Activated CD8-positive, alpha-beta memory T cell treated with anti-CD3 and anti-CD28 coated beads, Interleukin-2, amount 10 ng/mL, durations not matched to agents 7 days and 5 days (primary cell): ENCODE measurements at regions of chr5 and their contacts with region 1.

Region 1: GRCh38 chr5:175478384-175479124 is at the start of gene SFXN1:
- DNase-seq: peak; percentile 86
- ATAC-seq: peak; percentile 86
- H3K4me3 Mint-ChIP-seq: peak within 1 kb of the TSS; percentile 95
- H3K27ac Mint-ChIP-seq: peak within 1 kb of the TSS; percentile 92
- H3K4me1 Mint-ChIP-seq: peaks cover 42% of the 10 kb centered on the region
- H3K27me3 Mint-ChIP-seq: peaks cover 30% of the 10 kb centered on the region
- total RNA-seq, gene SFXN1: 174 to 230 TPM

Region 2: DNA sequence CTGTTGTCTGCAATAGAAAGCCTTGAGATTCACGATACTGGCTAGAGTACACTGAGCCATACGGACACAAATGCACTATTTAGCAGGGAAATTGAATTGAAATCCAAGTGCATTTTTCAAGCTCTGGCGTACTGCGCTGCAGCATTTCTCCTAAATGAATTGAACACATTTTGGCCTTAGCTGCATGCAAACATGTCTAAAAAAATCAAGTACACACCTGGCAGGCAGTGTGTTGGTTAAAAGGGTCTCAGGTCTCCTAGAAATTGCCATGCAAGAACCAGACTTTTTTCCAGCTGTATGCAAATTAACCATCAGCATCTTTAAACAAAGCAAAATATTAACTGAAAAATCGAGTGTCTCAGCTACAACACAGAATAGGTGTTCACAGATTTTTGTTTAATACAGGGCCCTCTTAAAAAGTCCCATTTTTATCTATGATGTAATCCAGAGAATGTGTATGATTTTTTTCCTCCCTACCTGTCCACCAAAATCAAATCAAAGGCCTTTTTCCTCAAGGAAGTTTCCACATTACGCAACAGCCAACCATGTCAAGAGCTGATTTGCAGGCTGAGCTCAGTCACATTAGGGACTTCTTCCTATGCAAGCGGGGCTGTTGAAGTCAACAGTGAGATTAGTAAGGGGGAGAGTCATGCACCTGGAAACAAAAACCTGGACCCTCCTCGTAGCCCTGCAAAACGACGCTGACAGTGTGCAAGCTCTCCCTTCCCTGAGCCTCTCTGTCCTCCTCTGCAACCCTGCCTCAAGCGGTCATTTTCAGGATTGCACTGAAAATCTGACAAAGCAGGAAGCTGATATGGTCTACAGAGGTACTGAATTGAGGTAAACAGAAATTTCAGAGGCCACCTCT is 14.2 kb before region 1 on chr5:
- CTCF ChIA-PET with region 1: interaction called, 35 read pairs
- DNase-seq: peak; percentile 86
- ATAC-seq: peak; percentile 98
- H3K4me3 Mint-ChIP-seq: no peak overlapping the region
- H3K27ac Mint-ChIP-seq: peak overlapping the region; percentile 39
- H3K4me1 Mint-ChIP-seq: peaks cover 12% of the 10 kb centered on the region
- H3K27me3 Mint-ChIP-seq: peaks cover 22% of the 10 kb centered on the region

Region 3: DNA sequence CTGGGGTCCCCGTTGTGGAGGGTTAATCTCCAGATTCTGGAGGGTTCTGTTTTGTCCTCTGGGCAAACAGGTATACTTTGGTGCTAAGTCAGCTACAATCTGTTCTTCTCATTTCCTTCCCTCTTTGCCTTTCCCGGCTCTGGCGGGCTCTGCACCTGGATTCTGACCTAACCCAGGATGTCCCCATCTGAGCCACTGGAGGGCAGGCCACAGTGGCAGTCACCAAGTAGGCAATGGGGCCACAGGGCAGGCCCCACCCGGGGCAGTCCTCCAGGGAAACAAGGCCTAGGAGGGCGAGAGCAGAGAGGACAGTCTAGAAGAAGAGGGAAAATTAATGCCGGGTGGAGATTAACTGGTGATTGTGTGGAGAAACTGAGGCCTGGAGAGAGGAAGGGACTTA is 138.9 kb after region 1 on chr5:
- CTCF ChIA-PET with region 1: no interaction called
- DNase-seq: no peak
- ATAC-seq: no peak
- H3K4me3 Mint-ChIP-seq: no peak overlapping the region
- H3K27ac Mint-ChIP-seq: no peak overlapping the region
- H3K4me1 Mint-ChIP-seq: no peaks in the 10 kb centered on the region
- H3K27me3 Mint-ChIP-seq: peaks cover 10% of the 10 kb centered on the region